ENCODE measurements at regions of chr11 and their contacts with region 1.

Region 1: DNA sequence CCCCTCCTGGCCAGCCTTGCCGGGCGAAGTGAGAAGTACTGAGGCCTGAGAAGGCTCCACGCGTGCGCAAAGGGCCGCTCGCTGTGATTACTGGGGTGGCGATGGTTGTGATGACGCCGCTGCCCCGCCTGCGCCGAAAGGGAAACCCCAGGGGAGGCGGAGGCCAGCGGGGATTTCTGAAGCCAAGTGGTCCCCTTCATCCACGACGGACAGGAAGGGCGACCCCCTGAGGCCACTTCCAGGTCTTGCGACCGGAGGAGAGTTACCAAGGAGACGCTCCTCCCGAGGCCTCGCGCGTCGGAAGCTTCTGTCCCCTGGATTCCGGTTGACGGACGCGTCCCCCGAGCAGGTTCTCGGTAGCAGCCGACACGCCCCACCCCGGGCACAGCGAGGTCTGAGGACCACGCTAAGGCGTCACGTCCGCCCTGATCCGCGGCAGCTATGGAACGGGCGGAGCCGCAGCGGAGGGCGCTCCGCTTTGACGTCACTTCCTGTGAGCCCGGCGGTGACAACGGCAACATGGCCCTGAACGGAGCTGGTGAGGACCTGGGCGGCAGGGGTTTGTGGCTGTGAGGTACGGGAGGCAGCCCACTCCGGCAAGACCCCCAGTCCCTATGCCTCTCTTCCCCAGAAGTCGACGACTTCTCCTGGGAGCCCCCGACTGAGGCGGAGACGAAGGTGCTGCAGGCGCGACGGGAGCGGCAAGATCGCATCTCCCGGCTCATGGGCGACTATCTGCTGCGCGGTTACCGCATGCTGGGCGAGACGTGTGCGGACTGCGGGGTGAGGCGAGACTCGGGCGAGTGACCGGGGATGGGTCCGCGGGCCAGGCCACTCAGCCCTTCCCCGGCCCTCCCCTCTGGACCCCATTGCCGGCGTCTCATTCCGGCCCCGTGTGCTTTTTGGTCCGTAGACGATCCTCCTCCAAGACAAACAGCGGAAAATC is at the start of gene ZNRD2:
- DNase-seq: peak; percentile 99
- H3K4me3 Mint-ChIP-seq: peak within 1 kb of the TSS; percentile 79
- H3K27ac Mint-ChIP-seq: peak within 1 kb of the TSS; percentile 88
- H3K4me1 Mint-ChIP-seq: peaks cover 46% of the 10 kb centered on the region
- H3K27me3 Mint-ChIP-seq: no peaks in the 10 kb centered on the region
- CTCF ChIP-seq: peak; percentile 67
- total RNA-seq, gene ZNRD2: 40.7 and 45.3 TPM in 2 replicates

Region 2: GRCh38 chr11:65540297-65541092 is 29.8 kb before region 1 on chr11:
- CTCF ChIA-PET with region 1: interaction called, 39 read pairs
- intact Hi-C with region 1: loop called (anchors 2 kb)
- DNase-seq: peak; percentile 90
- H3K4me3 Mint-ChIP-seq: peak overlapping the region; percentile 62
- H3K27ac Mint-ChIP-seq: no peak overlapping the region
- H3K4me1 Mint-ChIP-seq: peaks cover 22% of the 10 kb centered on the region
- H3K27me3 Mint-ChIP-seq: no peaks in the 10 kb centered on the region
- CTCF ChIP-seq: peak; percentile 69

Region 3: DNA sequence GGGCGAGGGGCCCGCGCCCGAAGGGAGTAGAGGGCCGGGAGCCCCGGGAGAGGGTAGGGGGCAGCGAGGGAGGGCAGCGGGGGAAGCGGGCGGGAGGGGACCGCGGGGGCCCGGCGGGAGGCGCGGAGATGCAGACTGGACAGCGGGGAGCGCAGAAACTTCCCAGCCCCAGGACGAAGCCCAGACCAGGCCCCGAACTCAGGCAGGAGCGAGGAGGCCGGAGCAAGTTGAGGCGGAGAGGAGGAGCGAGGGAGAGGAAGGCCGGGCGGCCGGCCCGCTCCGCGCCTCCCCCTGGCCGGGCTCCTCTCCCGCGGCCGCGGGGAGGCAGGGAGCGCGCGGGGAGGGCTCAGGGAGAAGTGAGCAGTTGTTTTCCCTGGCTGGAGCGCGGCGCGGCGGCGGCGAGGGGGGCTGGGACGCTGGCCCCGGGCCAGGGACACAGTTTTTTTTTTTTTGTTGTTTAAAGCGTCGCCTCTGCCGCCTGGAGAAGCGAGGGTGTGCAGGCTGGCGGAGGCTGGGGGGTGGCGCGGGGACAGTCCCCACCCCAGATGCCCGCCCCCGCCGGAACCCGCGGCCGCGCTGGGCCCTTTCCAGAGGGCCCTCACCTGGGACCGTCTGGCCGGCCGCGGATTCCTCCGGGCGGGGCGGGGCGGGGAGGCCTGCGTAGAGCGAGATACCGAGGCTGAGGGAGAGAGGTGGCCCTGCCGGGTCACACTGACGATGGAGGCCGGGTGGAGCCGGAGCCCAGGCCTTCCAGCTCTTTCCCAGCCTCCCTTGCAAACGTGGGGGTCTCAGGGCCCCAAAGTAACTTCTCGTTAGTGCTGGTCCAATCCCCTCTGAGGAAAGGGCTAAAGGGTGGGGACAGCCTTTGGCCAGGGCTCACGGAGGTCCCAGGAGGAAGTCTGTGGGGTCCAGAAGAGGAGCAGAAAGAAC is 12.0 kb before region 1 on chr11 and contains the start of gene LTBP3:
- CTCF ChIA-PET with region 1: interaction called, 21 read pairs
- intact Hi-C with region 1: no loop called
- DNase-seq: peak; percentile 81
- H3K4me3 Mint-ChIP-seq: peak within 1 kb of the TSS; percentile 77
- H3K27ac Mint-ChIP-seq: peak within 1 kb of the TSS; percentile 85
- H3K4me1 Mint-ChIP-seq: peaks cover 68% of the 10 kb centered on the region
- H3K27me3 Mint-ChIP-seq: no peaks in the 10 kb centered on the region
- CTCF ChIP-seq: no peak
- total RNA-seq, gene LTBP3: 166 and 169 TPM in 2 replicates

Measured in Calu3 (cell line).